PC-3 (cell line): ENCODE measurements at regions of chr5 and their contacts with region 1.

Region 1: DNA sequence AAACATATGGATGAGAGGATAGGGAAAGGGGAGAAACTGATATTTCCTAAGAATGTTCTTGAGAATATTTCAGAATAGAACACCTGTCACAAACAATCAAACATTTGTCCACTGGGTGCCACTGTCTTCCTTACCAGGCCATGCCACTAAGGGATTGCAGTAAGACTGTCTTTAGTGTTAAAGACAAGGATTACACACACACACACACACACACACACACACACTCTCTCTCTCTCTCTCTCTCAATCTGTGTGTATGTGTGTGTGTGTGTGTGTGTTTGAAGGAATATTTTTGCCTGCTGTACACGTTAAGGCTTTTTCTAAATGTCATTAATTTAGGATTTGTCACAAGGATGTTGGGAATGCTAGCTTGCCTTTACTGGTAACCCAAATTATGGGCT is 54.4 kb downstream of the CCDC192 start:
- DNase-seq: peak; percentile 78
- ATAC-seq: peak; percentile 81
- H3K4me3 ChIP-seq: no peak overlapping the region
- H3K27ac ChIP-seq: no peak overlapping the region
- H3K4me1 ChIP-seq: peaks cover 6% of the 10 kb centered on the region
- H3K27me3 ChIP-seq: no peaks in the 10 kb centered on the region
- CTCF ChIP-seq: peak; percentile 84

Region 2: GRCh38 chr5:127492854-127493738 is 264.5 kb before region 1 on chr5:
- CTCF ChIA-PET with region 1: no interaction called
- POLR2A ChIA-PET with region 1: no interaction called
- intact Hi-C with region 1: no loop called
- DNase-seq: peak; percentile 48
- ATAC-seq: peak; percentile 76
- H3K4me3 ChIP-seq: no peak overlapping the region
- H3K27ac ChIP-seq: no peak overlapping the region
- H3K4me1 ChIP-seq: no peaks in the 10 kb centered on the region
- H3K27me3 ChIP-seq: peaks cover 61% of the 10 kb centered on the region
- CTCF ChIP-seq: peak; percentile 98

Region 3: DNA sequence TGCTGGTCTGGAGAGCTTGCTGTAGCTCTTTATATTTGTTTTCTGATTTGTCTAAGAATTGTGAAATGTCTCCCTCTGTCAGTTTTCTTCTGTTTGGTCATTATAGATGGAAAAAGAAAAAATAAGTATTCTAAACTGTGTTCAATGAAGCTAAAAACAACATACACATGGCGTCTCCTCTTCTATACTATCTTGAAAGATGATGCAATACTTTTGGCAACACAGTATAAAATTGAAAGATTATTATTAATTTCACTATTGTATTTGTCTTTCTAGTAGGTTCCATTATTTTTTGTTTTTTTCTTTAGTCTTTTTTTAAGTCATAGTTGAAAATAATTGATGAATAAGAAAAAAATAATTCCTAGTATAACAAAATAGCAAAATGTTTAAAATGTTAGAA is 31.9 kb before region 1 on chr5:
- CTCF ChIA-PET with region 1: no interaction called
- POLR2A ChIA-PET with region 1: no interaction called
- intact Hi-C with region 1: no loop called
- DNase-seq: no peak
- ATAC-seq: no peak
- H3K4me3 ChIP-seq: no peak overlapping the region
- H3K27ac ChIP-seq: no peak overlapping the region
- H3K4me1 ChIP-seq: no peaks in the 10 kb centered on the region
- H3K27me3 ChIP-seq: no peaks in the 10 kb centered on the region
- CTCF ChIP-seq: no peak

Region 4: GRCh38 chr5:127813633-127814587 is 56.3 kb after region 1 on chr5:
- CTCF ChIA-PET with region 1: interaction called, 5 read pairs
- POLR2A ChIA-PET with region 1: no interaction called
- intact Hi-C with region 1: loop called (anchors 1 kb)
- DNase-seq: peak; percentile 83
- ATAC-seq: peak; percentile 90
- H3K4me3 ChIP-seq: peak overlapping the region; percentile 17; the same call in 1 of the 2 replicates
- H3K27ac ChIP-seq: peak overlapping the region; percentile 73
- H3K4me1 ChIP-seq: peaks cover 36% of the 10 kb centered on the region
- H3K27me3 ChIP-seq: no peaks in the 10 kb centered on the region
- CTCF ChIP-seq: no peak

Region 5: GRCh38 chr5:127833999-127834953 is 76.7 kb after region 1 on chr5:
- CTCF ChIA-PET with region 1: no interaction called
- POLR2A ChIA-PET with region 1: no interaction called
- intact Hi-C with region 1: loop called (anchors 1 kb)
- DNase-seq: peak; percentile 68
- ATAC-seq: peak; percentile 93
- H3K4me3 ChIP-seq: no peak overlapping the region
- H3K27ac ChIP-seq: peak overlapping the region; percentile 32
- H3K4me1 ChIP-seq: peaks cover 25% of the 10 kb centered on the region
- H3K27me3 ChIP-seq: no peaks in the 10 kb centered on the region
- CTCF ChIP-seq: no peak; the same call in 1 of the 2 replicates

Region 6: GRCh38 chr5:127875235-127876021 is 117.9 kb after region 1 on chr5:
- CTCF ChIA-PET with region 1: interaction called, 5 read pairs
- POLR2A ChIA-PET with region 1: no interaction called
- intact Hi-C with region 1: loop called (anchors 1 kb)
- DNase-seq: peak; percentile 78
- ATAC-seq: peak; percentile 76
- H3K4me3 ChIP-seq: no peak overlapping the region
- H3K27ac ChIP-seq: 0 out of 2 replicates have a peak overlapping the region, but pooled peaks have one; percentile 9
- H3K4me1 ChIP-seq: peaks cover 17% of the 10 kb centered on the region
- H3K27me3 ChIP-seq: no peaks in the 10 kb centered on the region
- CTCF ChIP-seq: peak; percentile 73

Region 7: DNA sequence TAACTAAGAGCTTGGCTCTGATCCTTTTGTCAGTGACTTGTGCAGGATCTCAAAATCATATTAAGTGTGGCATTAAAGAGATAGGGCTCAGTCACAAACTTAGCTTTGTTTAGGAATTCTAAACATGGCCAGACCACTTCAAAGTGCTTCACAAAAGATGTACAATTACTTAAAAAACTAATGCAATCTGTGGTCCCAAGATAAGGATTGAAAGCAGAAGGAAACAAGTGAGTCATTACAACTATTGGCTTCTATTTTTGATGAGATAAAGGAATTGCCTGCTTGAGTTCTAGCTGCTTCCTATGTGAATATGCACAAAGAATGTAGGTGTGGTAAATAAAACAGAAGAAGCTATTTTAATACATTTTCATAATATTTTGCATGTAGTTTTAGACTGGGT is 281.1 kb after region 1 on chr5:
- CTCF ChIA-PET with region 1: no interaction called
- POLR2A ChIA-PET with region 1: interaction called, 4 read pairs
- intact Hi-C with region 1: loop called (anchors 5 kb)
- DNase-seq: peak; percentile 79
- ATAC-seq: peak; percentile 80
- H3K4me3 ChIP-seq: no peak overlapping the region
- H3K27ac ChIP-seq: peak overlapping the region; percentile 79
- H3K4me1 ChIP-seq: peaks cover 27% of the 10 kb centered on the region
- H3K27me3 ChIP-seq: no peaks in the 10 kb centered on the region
- CTCF ChIP-seq: no peak